Calu3 (cell line): ENCODE measurements at regions of chr10 and their contacts with region 1.

Region 1: DNA sequence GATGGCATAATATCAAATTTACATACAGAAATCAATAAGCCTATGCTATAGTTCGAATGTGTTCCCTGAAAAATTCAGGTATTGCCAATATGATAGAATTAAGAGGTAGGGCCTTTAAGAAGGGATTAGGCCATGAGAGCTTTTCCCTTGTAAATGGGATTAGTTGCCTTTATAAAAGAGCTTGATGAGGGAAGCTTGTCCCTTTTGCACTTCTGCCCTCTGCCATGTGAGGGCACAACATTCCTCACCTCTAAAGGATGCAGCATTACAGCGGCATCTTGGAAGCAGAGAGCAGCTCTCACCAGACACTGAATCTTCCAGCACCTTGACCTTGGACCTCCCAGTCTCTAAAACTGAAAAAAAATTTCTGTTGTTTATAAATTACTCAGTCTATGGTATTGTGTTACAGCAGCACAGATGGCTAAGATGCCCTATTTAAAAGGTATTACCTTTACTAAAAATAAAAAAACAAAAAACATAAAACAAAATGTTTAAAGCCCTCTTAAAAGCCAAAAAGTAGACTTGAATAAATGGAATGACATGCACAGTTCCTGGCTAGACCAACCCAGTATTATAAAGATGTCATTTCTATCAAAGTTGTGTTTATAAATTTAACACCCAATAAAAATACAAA is 909.6 kb downstream of the REEP3 start:
- DNase-seq: peak; percentile 74
- H3K4me3 Mint-ChIP-seq: no peak overlapping the region
- H3K27ac Mint-ChIP-seq: no peak overlapping the region
- H3K4me1 Mint-ChIP-seq: peaks cover 8% of the 10 kb centered on the region
- H3K27me3 Mint-ChIP-seq: no peaks in the 10 kb centered on the region
- CTCF ChIP-seq: peak; percentile 79

Region 2: DNA sequence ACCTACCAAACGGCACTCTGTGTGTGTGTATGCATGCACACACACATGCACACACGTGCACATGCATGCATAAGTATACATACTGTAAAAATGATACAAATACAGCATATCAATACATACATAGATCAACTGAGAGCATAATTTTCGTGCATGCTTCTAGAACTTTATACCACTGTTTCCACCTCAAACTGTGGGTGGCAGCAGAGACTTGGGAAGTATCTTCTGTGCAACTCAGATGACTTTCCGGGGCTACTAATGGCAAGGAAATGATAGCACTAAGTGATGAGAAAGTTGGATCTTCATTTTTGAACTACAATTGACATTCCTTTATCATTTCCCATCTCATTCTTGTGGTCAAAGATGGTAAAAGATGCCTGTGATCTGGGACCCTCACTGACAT is 338.9 kb before region 1 on chr10:
- CTCF ChIA-PET with region 1: no interaction called
- intact Hi-C with region 1: loop called (anchors 2 kb)
- DNase-seq: peak; percentile 41
- H3K4me3 Mint-ChIP-seq: no peak overlapping the region
- H3K27ac Mint-ChIP-seq: no peak overlapping the region
- H3K4me1 Mint-ChIP-seq: peaks cover 8% of the 10 kb centered on the region
- H3K27me3 Mint-ChIP-seq: no peaks in the 10 kb centered on the region
- CTCF ChIP-seq: peak; percentile 48

Region 3: DNA sequence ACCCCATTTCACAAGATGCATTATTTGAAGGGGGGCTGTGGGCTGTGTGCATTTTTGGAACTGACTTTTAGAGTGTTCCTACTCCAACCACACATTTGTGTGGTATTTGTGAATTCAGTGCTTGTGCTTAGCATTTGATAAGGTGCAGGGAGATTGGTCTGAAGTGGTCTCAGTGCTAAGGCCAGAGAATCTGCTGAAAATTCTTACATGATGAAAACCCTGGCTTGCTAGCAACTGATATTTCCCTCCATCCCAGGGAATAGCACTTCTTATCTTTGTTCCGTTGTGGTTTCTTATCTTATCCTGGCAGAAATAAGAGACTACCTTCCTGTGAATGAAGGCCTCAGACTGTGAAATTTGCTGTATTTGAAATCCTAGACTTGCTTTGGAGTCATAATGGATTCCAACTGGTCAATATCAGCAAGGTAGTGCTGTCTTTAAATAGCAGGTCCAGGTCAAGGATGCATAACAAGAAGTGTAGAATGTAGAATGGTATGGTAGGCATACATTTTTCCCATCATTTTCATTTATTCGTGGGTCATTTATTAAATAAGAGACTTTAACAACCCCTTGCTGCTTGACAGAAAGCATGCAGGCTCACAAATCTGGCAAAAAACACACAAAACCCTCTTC is 77.3 kb after region 1 on chr10:
- CTCF ChIA-PET with region 1: no interaction called
- intact Hi-C with region 1: loop called (anchors 5 kb)
- DNase-seq: no peak
- H3K4me3 Mint-ChIP-seq: no peak overlapping the region
- H3K27ac Mint-ChIP-seq: peak overlapping the region; percentile 67
- H3K4me1 Mint-ChIP-seq: peaks cover 45% of the 10 kb centered on the region
- H3K27me3 Mint-ChIP-seq: no peaks in the 10 kb centered on the region
- CTCF ChIP-seq: no peak

Region 4: DNA sequence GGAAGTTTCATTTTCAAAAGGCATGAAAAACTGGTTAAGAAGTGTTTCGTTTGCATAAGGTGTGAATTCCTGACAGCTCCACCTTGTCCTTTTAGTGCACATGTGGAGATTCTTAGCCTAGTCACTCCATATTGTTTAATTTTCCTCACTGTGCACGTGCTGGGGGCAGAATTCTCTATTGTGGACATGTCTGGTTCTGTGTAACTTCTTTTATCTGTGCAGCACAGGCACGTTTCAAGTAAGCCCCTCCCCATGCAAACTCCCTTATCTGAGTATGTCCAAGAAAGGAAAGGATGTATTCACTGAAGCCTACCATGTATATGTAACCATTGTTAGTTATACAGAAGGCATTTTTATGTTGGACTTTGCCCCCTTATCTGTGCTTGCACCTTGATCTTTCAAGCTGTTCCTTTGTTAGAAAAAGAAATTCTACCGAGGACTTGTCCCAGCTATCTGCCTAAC is 436.7 kb after region 1 on chr10:
- CTCF ChIA-PET with region 1: no interaction called
- intact Hi-C with region 1: loop called (anchors 10 kb)
- DNase-seq: peak; percentile 8
- H3K4me3 Mint-ChIP-seq: peak overlapping the region; percentile 22
- H3K27ac Mint-ChIP-seq: peak overlapping the region; percentile 52
- H3K4me1 Mint-ChIP-seq: peaks cover 21% of the 10 kb centered on the region
- H3K27me3 Mint-ChIP-seq: no peaks in the 10 kb centered on the region
- CTCF ChIP-seq: no peak